ENCODE measurements at regions of chr19 and their contacts with region 1.

Region 1: GRCh38 chr19:51473009-51473707 is 5.2 kb upstream of the CEACAM18 start:
- DNase-seq: peak; percentile 46 to 80 (median 66)
- H3K4me3 ChIP-seq: no peak overlapping the region
- H3K27ac ChIP-seq: no peak overlapping the region
- H3K27me3 ChIP-seq: peaks cover 0 to 44% (median 10%) of the 10 kb centered on the region in 45 donors
- CTCF ChIP-seq: peak; percentile 64 to 96 (median 90)

Region 2: DNA sequence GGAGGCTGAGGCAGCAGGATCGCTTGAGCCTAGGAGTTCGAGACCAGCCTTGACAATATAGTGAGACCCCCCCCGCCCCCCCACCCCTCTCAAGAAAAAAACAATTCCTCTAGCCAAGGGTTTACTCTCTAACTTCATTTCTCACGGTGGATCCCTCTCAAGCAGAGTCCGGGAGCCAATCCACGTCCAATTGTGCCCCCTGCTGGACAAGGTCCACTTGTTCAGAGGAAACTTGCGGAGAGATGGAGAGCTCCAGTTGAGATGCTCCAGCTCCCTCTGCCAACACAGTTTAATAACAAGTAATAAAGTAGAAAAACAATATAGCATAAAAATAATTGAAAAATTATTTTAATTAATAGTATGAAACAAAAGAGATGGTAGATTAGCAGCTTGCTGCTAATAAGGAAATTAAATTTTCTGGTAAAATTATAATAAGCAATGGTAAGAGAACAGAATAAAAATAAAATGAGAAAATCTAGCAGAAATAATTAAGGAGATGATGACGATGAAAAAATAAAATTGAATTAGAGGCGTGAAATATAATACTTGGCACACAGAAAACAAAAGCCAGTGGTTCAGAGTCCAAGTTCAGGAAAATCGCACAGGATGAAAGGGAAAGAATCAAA is 187.9 kb after region 1 on chr19:
- intact Hi-C with region 1: loop called (anchors 2 to 5 kb)
- DNase-seq: peak in 8 of 10 donors; percentile 70 to 86 (median 84)
- H3K4me3 ChIP-seq: no peak overlapping the region
- H3K27ac ChIP-seq: no peak overlapping the region
- H3K27me3 ChIP-seq: peaks cover 0 to 43% (median 14%) of the 10 kb centered on the region in 45 donors
- CTCF ChIP-seq: peak; percentile 42 to 79 (median 70)